Gastrocnemius medialis (tissue), 4 donors: ENCODE measurements at regions of chr17 and their contacts with region 1.

Region 1: DNA sequence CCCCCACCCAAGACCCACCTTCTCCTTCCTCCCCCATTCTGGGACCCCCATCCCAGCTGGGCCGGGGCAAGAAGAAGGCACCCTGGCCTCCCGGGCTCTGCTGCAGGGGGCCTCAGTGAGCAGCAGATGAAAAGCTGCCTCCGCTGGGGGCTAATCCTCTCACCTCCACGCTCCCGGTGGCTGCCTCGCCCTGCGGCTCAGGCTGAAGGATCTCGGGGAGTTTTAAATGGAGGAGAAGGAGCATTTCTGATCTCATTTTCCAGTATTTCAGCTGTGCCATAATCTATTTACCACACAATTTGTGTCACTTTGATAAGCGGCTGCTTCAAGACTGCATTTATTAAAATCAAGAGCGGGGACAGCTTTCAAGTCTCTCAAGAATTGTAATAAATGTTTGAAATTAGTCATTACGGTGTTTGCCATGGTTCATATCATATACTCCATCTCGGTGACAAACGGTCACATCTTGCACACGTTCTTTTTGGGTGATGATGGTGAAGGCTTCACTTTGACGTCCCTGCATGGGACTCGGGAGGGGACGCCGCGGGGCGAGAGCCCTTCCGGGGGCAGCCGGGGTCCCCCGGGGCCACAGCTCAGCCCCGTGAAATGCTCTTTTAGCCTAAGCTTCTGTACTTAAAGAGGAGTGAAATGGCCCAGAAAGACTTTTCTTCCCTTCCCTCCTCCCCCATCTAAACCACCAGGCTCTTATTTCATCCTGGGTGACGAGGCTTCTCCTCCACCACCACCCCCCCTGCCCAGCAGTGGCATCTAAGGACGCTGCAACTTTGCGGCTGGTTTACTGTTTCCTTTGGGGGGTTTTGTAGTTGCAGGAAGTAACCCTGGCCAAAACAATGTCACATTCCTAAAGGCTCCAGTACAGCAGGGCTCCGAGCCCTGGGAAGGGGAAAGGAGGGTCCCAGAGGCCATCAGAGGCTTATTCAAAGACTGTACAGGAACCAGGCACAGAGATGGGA is 313.1 kb upstream of the TNRC6C start:
- DNase-seq: peak; percentile 6 to 14
- ATAC-seq: peak in 1 of 2 donors; percentile 68
- H3K4me3 ChIP-seq: peak overlapping the region; percentile 3 to 46 (median 26)
- H3K27ac ChIP-seq: peak overlapping the region in 1 of 4 donors; percentile 47
- H3K4me1 ChIP-seq: peaks cover 7 to 12% of the 10 kb centered on the region in 2 donors
- H3K27me3 ChIP-seq: no peaks in the 10 kb centered on the region
- CTCF ChIP-seq: peak in 3 of 5 experiments; percentile 30 to 49 (median 32)
- POLR2A ChIP-seq: no peak

Region 2: DNA sequence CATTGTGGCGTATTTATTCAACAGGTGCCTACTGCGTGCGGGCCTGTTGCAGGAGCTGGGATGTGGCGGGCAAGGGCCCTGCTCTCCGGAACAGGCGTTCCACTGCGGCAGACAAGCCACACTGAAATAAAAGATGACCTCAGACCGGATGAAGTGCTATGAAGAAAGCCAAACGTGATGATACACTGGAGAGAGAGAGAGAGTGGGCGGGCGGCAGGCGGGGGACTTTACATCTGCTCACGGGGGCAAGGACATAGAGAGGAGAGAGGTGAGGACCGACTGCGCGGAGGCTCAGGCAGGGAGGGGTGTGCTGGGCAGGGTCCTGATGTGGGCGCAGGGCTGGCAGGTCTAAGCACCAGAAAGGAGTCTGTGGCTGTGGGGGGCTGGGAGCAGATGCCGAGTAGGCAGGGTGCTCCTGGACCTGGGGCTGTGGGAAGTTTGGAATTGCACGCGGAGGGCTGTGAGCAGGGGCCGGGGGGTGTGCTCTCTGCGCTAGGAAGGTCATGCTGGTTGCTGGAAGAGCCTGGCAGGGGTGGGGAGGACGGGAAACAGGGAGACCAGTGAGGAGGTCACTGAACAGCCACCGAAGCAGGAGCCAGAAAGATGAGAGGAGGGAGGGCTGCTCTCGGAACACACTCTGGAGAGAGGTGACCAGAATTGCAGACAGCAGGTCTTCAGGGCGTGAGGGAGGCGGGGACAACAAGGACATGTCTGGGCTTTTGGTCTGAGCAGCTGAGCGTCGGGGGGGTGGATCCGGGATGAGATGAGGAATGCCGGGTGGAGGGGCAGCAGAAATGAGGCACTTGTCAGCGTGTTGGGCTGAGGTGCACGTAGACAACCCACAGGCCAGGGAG is 944.5 kb before region 1 on chr17:
- in situ Hi-C with region 1: no loop called
- intact Hi-C with region 1: no loop called
- DNase-seq: peak; percentile 50 to 79
- ATAC-seq: peak; percentile 89 to 91
- H3K4me3 ChIP-seq: peak overlapping the region; percentile 44 to 55 (median 48)
- H3K27ac ChIP-seq: peak overlapping the region; percentile 88 to 92 (median 88)
- H3K4me1 ChIP-seq: peaks cover 49 to 72% of the 10 kb centered on the region in 2 donors
- H3K27me3 ChIP-seq: no peaks in the 10 kb centered on the region
- CTCF ChIP-seq: no peak
- POLR2A ChIP-seq: peak; percentile 65 to 72

Region 3: GRCh38 chr17:77542551-77543490 is 102.5 kb before region 1 on chr17:
- in situ Hi-C with region 1: no loop called
- intact Hi-C with region 1: loop called (anchors 1 kb)
- DNase-seq: peak; percentile 69 to 77
- ATAC-seq: peak; percentile 92 to 96
- H3K4me3 ChIP-seq: no peak overlapping the region
- H3K27ac ChIP-seq: no peak overlapping the region
- H3K4me1 ChIP-seq: no peaks in the 10 kb centered on the region
- H3K27me3 ChIP-seq: peaks cover 0 to 4% (median 3%) of the 10 kb centered on the region in 3 donors
- CTCF ChIP-seq: peak; percentile 79 to 94 (median 88)
- POLR2A ChIP-seq: no peak

Region 4: DNA sequence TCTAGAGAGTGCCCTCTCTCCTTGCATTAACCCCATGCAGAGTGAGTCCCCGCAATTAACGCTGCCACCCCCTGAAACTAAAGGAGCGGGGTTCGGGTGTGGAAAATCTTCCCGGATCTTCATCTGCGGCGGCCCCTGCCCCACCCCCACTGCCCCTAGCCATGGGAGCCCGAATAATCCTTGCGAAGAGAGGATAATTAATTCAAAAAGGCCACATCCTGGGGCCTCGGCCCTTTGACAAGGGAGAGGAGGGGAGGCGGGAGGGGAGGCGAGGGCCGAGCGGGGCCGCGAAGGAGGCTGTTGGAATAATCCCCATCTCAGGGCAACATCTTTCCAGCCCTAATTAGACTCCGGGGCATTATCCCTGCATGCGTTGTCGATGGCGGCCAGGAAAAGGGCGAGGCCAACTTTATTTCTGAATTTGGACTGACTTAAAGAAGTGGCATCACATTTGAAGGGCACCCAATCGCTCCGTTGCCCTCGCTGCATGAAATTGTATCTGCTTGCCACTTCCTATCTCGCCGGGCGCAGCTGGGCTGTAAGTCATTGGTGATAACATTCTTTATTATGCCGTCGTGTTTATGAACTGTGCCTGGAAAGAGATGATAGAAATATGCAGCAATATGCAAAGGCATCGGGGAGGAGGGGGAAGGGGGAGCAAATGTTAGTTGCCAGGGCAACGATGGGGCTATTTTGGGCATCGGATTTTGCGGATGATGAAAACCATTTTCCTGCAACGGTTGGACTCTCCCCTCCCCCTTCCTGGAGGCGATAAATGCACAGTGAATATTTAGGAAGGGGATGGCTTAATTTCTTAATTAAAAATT is 74.0 kb before region 1 on chr17:
- in situ Hi-C with region 1: loop called in 1 of 4 experiments (anchors 25 kb)
- intact Hi-C with region 1: no loop called
- DNase-seq: no peak
- ATAC-seq: no peak
- H3K4me3 ChIP-seq: peak overlapping the region in 2 of 4 donors; percentile 16 to 33
- H3K27ac ChIP-seq: no peak overlapping the region
- H3K4me1 ChIP-seq: peaks cover 9 to 13% of the 10 kb centered on the region in 2 donors
- H3K27me3 ChIP-seq: no peaks in the 10 kb centered on the region
- CTCF ChIP-seq: no peak
- POLR2A ChIP-seq: no peak

Region 5: GRCh38 chr17:77609553-77610517 is 35.5 kb before region 1 on chr17:
- in situ Hi-C with region 1: no loop called
- intact Hi-C with region 1: loop called (anchors 5 kb)
- DNase-seq: no peak
- ATAC-seq: no peak
- H3K4me3 ChIP-seq: no peak overlapping the region
- H3K27ac ChIP-seq: peak overlapping the region in 2 of 4 donors; percentile 10 to 31
- H3K4me1 ChIP-seq: no peaks in the 10 kb centered on the region
- H3K27me3 ChIP-seq: peaks cover 5 to 10% (median 6%) of the 10 kb centered on the region in 3 donors
- CTCF ChIP-seq: no peak
- POLR2A ChIP-seq: no peak

Region 6: GRCh38 chr17:78013683-78014467 is 368.5 kb after region 1 on chr17:
- in situ Hi-C with region 1: no loop called
- intact Hi-C with region 1: loop called (anchors 1 kb)
- DNase-seq: peak in 1 of 2 donors; percentile 43
- ATAC-seq: peak; percentile 73 to 80
- H3K4me3 ChIP-seq: no peak overlapping the region
- H3K27ac ChIP-seq: peak overlapping the region in 1 of 4 donors; percentile 0
- H3K4me1 ChIP-seq: peaks cover 0 to 7% of the 10 kb centered on the region in 2 donors
- H3K27me3 ChIP-seq: no peaks in the 10 kb centered on the region
- CTCF ChIP-seq: peak; percentile 68 to 83 (median 76)
- POLR2A ChIP-seq: no peak